ENCODE measurements at regions of chr1 and their contacts with region 1.

Region 1: DNA sequence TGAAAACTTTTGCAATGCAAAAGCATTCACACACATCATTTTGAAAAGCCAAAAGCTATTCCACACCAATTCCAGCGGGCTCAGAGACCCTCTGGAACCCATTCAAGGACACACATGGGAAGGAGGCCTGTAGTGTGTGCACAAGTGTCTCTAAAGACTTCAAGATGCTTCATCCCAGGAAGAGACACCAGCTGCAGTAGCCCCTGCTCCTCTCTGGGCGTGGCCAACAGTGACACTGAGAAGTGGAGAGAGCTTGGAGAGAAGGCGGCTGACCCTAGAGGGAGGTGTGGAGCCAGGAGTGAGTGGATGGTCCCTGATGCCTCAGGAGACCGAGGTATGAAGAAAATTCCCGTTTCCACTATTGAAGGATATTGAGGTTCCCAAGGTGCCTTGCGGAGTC is 14.9 kb upstream of the TNNI1 start:
- DNase-seq: peak; percentile 38
- H3K4me3 Mint-ChIP-seq: no peak overlapping the region
- H3K27ac Mint-ChIP-seq: no peak overlapping the region
- H3K4me1 Mint-ChIP-seq: peaks cover 12% of the 10 kb centered on the region
- H3K27me3 Mint-ChIP-seq: no peaks in the 10 kb centered on the region
- CTCF ChIP-seq: no peak

Region 2: DNA sequence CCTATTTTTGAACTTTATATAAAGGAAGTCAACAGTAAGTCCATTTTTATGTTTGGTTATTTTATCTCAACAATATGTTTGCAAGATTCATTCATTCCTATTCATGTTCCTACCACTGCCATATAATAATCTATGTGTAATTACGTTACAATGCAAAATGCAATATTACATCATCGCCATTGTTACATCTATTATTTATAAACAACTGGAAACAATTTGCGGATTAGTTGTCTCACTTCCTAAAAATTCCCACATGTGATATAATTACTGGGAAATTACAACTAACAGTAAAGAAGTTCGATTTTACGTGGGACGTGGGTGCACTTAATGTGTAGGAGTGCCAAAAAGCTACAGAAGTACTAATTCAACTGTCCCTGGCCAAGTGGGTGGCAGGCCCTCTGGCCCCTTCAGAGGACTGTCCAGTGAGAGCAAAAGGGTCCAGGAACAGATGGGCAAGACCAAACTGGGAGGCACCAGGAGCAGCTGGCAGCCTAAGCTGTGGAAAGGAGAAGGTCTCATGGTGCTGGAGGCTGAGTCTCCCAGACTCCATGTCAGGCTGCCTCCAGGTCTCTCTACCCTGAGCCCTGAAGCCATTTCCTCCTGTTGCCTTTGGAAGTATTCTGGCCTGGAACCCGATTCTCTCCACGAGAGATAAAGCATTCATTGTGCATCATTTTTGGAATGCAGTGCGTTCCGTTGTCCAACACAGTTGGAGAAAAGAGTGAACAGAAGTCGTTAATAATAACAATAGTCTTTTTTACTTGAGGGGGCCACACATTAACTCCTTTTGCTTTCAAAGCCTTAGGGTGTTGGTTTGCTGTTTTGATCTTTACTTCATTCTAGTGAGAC is 101.8 kb before region 1 on chr1:
- CTCF ChIA-PET with region 1: no interaction called
- POLR2A ChIA-PET with region 1: no interaction called
- intact Hi-C with region 1: no loop called
- DNase-seq: no peak
- H3K4me3 Mint-ChIP-seq: no peak overlapping the region
- H3K27ac Mint-ChIP-seq: no peak overlapping the region
- H3K4me1 Mint-ChIP-seq: peaks cover 11% of the 10 kb centered on the region
- H3K27me3 Mint-ChIP-seq: no peaks in the 10 kb centered on the region
- CTCF ChIP-seq: no peak

Region 3: DNA sequence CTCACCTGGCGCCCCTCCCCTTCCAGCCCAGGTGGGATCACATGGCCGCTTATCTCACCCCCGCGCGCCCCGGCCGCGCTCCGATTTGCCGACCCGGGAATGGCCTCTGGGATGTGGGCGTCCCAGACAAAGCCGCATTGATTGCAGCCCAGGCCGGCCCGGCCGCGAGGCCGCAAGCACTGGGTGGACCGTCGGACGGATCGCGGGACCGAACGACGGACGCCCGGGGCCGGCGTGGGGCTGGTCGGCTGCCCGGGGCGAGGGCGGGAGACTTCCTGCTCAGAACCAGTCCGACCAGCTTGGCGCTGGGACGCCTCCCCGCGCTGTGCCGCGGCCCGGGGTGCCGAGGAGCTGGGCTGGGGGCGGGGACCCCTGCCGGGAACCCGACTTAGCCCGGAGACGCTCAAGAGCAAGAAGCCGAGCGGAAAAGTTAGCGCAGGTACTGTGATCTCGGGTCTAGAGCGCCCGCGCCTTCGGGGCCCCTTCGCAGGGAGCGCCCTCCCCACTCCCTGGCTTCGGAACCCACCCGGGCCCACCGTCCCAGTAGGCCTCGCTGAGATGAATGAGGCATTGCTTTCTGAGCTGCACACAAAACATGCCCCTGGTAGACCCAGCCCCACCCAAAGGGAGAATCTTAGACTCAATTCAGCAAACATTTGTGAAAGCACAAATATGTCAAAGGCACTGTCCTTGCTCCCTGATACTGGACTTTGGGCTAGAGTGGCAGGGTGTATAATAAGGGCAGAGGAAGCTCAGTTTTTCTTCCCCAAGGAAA is 36.9 kb before region 1 on chr1:
- CTCF ChIA-PET with region 1: interaction called, 23 read pairs
- POLR2A ChIA-PET with region 1: interaction called, 12 read pairs
- intact Hi-C with region 1: no loop called
- DNase-seq: peak; percentile 75
- H3K4me3 Mint-ChIP-seq: peak overlapping the region; percentile 66
- H3K27ac Mint-ChIP-seq: no peak overlapping the region
- H3K4me1 Mint-ChIP-seq: peaks cover 24% of the 10 kb centered on the region
- H3K27me3 Mint-ChIP-seq: no peaks in the 10 kb centered on the region
- CTCF ChIP-seq: no peak

Region 4: DNA sequence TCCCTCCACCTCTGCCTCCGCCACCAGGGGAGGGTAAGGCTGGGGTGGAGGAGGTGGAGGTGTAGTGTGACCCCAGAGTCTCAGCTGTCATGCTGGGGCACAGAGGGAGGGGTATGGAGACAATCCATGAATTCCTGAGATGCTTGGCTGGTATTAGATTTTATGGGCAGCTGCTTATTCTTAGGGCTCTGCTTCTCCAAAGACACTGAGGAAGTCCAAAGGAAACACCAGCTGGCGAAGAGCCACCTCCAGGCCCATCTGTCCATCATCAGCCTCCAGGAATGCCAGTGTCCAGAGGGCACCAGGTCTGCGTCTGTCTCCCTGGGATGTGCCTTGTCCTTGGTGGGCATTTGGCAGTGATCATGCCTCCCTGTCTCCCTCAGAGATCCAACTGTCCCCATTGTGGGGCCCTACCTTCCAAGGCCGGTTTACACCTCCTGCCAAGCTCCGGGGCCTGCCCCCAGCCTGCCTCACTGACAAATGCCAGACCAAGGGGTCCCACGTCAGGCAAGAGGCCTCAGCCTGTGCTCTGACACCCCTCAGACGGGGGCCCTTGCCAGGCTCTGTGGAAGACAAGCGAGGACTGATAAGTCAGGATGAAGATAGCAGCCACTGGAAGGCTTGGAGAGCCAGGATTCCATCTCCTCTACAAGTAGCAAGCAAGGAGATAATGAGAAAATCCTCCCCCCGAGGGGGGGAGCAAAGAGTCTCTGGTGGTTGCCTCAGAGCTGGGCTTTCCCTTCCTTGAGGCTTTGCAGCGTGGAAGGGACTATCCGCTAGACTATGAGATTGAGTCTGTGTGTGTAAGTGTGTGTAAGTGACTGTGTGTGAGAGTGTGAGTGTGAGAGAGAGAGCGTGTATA is 16.4 kb before region 1 on chr1:
- CTCF ChIA-PET with region 1: interaction called, 24 read pairs
- POLR2A ChIA-PET with region 1: no interaction called
- intact Hi-C with region 1: no loop called
- DNase-seq: no peak
- H3K4me3 Mint-ChIP-seq: no peak overlapping the region
- H3K27ac Mint-ChIP-seq: no peak overlapping the region
- H3K4me1 Mint-ChIP-seq: no peaks in the 10 kb centered on the region
- H3K27me3 Mint-ChIP-seq: peaks cover 37% of the 10 kb centered on the region
- CTCF ChIP-seq: no peak

Region 5: GRCh38 chr1:201456499-201457309 is 20.3 kb after region 1 on chr1:
- CTCF ChIA-PET with region 1: interaction called, 153 read pairs
- POLR2A ChIA-PET with region 1: interaction called, 1,388 read pairs
- intact Hi-C with region 1: no loop called
- DNase-seq: peak; percentile 97
- H3K4me3 Mint-ChIP-seq: no peak overlapping the region
- H3K27ac Mint-ChIP-seq: peak overlapping the region; percentile 67
- H3K4me1 Mint-ChIP-seq: peaks cover 49% of the 10 kb centered on the region
- H3K27me3 Mint-ChIP-seq: no peaks in the 10 kb centered on the region
- CTCF ChIP-seq: no peak

Region 6: DNA sequence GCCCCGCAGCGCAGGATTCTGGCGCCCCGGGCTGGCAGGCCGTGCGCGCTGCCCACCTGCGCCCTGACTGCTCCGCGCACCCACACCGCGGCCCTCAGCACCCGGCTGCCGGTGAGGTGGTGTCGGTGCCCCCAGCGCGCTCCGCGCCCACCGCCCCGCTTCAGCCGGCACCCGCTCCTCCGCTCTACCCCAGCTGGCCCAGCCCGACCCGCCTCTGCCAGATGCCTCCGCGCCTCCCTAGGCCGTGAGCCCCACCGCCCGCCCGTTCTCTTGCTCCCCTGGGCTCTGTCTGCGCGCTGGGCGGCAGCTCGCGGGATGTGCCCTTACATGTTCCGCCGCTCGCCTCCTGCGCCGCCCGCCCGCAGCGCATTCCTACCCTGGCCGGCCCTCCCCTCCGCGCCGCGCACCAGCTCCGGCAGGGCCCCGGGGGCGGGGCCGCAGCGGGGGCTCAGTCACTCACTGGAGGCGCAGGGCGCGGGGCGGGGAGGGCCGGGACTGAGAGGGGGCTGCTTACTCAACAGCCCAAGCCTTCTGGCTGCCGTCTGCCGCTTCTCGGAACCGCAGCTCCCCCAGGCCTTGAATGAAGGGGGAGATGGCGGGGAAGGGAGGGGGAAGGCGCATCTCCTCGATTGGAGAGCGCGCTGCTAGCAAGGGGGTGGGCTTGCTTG is 32.6 kb after region 1 on chr1 and contains the start of gene PHLDA3:
- CTCF ChIA-PET with region 1: interaction called, 153 read pairs
- POLR2A ChIA-PET with region 1: interaction called, 1,388 read pairs
- intact Hi-C with region 1: no loop called
- DNase-seq: peak; percentile 95
- H3K4me3 Mint-ChIP-seq: peak within 1 kb of the TSS; percentile 97
- H3K27ac Mint-ChIP-seq: peak within 1 kb of the TSS; percentile 90
- H3K4me1 Mint-ChIP-seq: peaks cover 55% of the 10 kb centered on the region
- H3K27me3 Mint-ChIP-seq: no peaks in the 10 kb centered on the region
- CTCF ChIP-seq: no peak
- total RNA-seq, gene PHLDA3: 169 and 204 TPM in 2 replicates

Region 7: GRCh38 chr1:201506556-201507359 is 70.4 kb after region 1 on chr1 and contains the start of gene CSRP1:
- CTCF ChIA-PET with region 1: interaction called, 3,816 read pairs
- POLR2A ChIA-PET with region 1: interaction called, 17 read pairs
- intact Hi-C with region 1: no loop called
- DNase-seq: peak; percentile 89
- H3K4me3 Mint-ChIP-seq: peak within 1 kb of the TSS; percentile 79
- H3K27ac Mint-ChIP-seq: peak within 1 kb of the TSS; percentile 86
- H3K4me1 Mint-ChIP-seq: peaks cover 54% of the 10 kb centered on the region
- H3K27me3 Mint-ChIP-seq: no peaks in the 10 kb centered on the region
- CTCF ChIP-seq: no peak
- total RNA-seq, gene CSRP1: 263 and 358 TPM in 2 replicates

Region 8: GRCh38 chr1:201530741-201531531 is 94.5 kb after region 1 on chr1:
- CTCF ChIA-PET with region 1: interaction called, 3,816 read pairs
- POLR2A ChIA-PET with region 1: no interaction called
- intact Hi-C with region 1: no loop called
- DNase-seq: peak; percentile 91
- H3K4me3 Mint-ChIP-seq: no peak overlapping the region
- H3K27ac Mint-ChIP-seq: peak overlapping the region; percentile 46
- H3K4me1 Mint-ChIP-seq: peaks cover 9% of the 10 kb centered on the region
- H3K27me3 Mint-ChIP-seq: no peaks in the 10 kb centered on the region
- CTCF ChIP-seq: peak; percentile 99

Region 9: DNA sequence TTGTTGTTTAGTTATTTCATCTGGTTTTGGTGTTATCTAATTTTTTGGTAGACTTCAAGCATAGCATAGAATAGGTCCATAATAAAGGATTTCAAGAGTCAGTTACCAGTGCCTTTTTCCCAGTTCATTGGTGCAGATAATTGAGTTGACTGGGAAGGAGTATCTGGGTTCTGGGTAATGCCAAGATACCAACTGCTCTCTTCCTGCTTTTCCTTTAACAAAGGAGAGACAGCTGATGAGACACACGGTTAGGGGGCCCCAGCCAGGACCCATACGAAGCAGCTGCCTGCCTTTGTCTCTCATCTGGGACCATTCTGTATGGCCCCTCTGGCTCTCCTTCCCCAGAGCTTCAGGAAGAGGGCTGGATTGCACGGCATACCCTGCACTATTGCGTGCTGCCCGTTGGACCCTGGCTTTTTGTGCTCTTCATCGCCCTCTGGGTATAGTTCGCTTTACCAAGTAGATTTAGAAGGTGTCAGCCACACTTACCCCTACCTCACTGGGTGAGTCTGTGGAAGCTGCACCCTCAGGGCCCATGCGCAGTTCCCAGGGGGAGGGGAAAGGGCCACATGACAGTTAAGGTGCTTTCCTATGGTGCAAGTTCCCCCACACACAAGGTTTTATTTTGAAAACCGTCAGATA is 109.6 kb after region 1 on chr1:
- CTCF ChIA-PET with region 1: no interaction called
- POLR2A ChIA-PET with region 1: no interaction called
- intact Hi-C with region 1: no loop called
- DNase-seq: no peak
- H3K4me3 Mint-ChIP-seq: no peak overlapping the region
- H3K27ac Mint-ChIP-seq: peak overlapping the region; percentile 39
- H3K4me1 Mint-ChIP-seq: no peaks in the 10 kb centered on the region
- H3K27me3 Mint-ChIP-seq: no peaks in the 10 kb centered on the region
- CTCF ChIP-seq: peak; percentile 5

Measured in MCF 10A (cell line).